Dendritic cell treated with granulocyte-macrophage colony-stimulating factor and Interleukin-4, amounts not matched to agents 40 ng/mL and 50 ng/mL, for 4 days (primary cell): ENCODE measurements at regions of chr3 and their contacts with region 1.

Region 1: DNA sequence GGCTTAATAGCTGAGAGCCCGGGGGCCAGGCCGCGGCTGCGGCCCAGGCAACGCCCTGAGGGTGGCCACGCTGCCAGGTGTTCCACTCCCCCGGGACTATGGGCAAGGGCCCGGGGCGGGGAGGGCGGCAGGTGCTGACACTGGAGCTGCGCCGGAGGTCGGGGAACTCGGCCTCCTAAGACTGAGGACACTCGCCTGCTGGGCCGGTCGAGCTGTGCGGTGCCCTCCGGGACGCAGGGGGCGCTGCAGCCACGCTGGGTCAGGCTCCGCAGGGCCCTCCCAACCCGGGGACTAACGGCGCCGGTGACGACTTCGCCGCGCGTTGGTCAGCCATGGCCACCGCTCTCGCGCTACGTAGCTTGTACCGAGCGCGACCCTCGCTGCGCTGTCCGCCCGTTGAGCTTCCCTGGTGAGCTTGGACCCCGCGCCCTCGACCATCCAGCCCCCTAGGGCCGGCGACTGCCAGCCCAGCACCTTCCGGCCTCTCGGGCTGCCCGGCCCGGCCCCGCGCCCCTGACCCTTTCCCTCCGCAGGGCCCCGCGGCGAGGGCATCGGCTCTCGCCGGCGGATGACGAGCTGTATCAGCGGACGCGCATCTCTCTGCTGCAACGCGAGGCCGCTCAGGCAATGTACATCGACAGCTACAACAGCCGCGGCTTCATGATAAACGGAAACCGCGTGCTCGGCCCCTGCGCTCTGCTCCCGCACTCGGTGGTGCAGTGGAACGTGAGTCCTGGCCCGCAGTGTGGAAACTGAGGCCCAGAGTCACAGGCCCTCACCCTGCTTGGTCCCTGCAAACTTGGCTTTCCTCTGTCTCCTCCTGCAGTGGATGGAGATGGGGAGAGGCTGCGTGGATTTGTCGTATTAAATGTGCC is at the start of gene NDUFAF3:
- H3K4me3 Mint-ChIP-seq: peak within 1 kb of the TSS; percentile 91
- H3K27ac Mint-ChIP-seq: peak within 1 kb of the TSS; percentile 98
- H3K4me1 Mint-ChIP-seq: peaks cover 71% of the 10 kb centered on the region
- H3K27me3 Mint-ChIP-seq: no peaks in the 10 kb centered on the region

Region 2: DNA sequence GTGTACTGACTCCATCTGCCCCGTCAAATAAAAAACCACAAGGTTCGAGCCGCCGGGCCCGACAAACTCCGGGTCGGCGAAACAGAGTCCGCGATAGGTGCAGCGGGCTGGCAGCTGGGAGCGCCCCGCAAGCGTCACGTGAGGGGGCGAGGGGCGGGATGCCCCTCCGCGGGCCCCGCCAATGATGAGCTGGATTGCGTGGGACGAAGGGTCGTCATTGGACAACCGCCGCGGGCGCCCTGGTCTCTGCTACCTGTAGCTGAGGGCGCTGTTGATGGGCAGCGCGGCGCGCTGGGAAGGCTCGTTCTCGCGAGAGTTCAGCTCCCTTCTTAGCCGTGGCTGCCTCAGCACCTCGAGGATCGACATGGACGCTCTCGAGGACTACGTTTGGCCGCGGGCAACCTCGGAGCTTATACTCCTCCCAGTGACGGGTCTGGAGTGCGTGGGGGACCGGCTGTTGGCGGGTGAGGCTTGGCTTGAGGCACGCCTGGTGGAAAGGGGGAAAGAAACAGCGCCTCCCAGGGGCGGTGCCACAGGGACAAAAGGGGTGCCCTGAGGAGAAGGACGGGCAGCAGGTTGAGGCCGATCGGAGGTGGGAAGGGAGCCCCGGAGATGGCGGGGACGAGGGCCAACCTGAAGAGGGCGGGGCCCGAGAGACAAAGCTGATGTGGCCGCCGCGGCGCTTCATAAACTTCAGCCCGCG is 14.8 kb before region 1 on chr3 and contains the start of gene WDR6:
- intact Hi-C with region 1: loop called (anchors 1 kb)
- H3K4me3 Mint-ChIP-seq: peak within 1 kb of the TSS; percentile 99
- H3K27ac Mint-ChIP-seq: peak within 1 kb of the TSS; percentile 100
- H3K4me1 Mint-ChIP-seq: peaks cover 39% of the 10 kb centered on the region
- H3K27me3 Mint-ChIP-seq: no peaks in the 10 kb centered on the region

Region 3: DNA sequence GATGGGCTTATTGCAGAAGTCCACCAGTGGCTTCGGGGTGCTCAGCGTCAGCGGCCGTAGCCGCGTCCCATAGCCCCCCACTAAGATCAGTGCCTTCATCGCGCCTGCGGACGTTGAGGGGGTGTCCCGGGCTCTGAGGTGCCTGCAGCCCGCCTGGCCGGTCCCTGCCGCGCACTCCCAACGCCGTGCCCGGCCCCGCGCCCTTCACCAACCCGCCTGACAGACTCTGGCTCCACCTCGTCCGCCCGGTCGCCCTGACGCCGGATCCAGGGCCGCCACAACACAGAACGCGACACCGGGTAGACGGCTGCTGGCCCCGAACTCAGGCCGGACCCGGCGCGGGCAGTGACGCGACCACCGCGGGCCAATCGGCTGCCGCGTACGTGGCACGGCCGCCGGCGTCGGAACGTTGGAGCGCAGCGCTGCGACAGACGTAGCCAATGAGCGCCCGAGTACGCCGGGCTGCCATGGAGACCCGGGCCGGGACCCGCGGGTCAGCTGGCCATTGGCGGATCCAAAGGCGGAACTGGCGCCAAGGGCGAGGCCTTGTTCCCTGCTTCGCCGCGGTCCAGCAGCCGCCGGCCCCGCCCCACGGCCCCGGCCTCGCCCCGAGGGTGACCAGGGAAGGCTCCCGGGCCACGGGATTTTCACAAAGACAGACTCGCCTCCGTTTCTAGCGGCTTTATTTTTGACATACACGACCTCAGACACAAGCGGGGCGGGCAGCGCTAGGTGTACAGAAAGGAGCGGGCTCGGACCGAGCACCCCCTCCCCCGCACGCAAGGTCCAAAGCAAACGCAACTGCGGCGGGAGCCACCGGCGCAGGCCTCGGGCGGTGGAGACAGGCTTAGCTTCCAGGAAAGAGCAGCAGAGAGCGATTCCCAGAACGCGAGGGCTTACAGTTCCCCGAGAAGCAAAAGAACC is 701.8 kb after region 1 on chr3 and contains the start of gene GMPPB:
- intact Hi-C with region 1: loop called (anchors 5 kb)
- H3K4me3 Mint-ChIP-seq: peak within 1 kb of the TSS; percentile 94
- H3K27ac Mint-ChIP-seq: peak within 1 kb of the TSS; percentile 100
- H3K4me1 Mint-ChIP-seq: peaks cover 62% of the 10 kb centered on the region
- H3K27me3 Mint-ChIP-seq: peaks cover 2% of the 10 kb centered on the region